B cell (primary cell): ENCODE measurements at regions of chr15 and their contacts with region 1.

Region 1: GRCh38 chr15:56732921-56733797 is at the start of gene ZNF280D:
- DNase-seq: peak; percentile 86
- ATAC-seq: peak; percentile 84
- H3K4me3 ChIP-seq: peak within 1 kb of the TSS; percentile 65 to 92 (median 83)
- H3K4me3 Mint-ChIP-seq: peak within 1 kb of the TSS; percentile 94
- H3K27ac ChIP-seq: peak within 1 kb of the TSS; percentile 59 to 83
- H3K27ac Mint-ChIP-seq: peak within 1 kb of the TSS; percentile 92
- H3K4me1 ChIP-seq: peaks cover 24 to 25% of the 10 kb centered on the region in 2 donors
- H3K4me1 Mint-ChIP-seq: peaks cover 36% of the 10 kb centered on the region
- H3K27me3 ChIP-seq: no peaks in the 10 kb centered on the region
- H3K27me3 Mint-ChIP-seq: no peaks in the 10 kb centered on the region
- CTCF ChIP-seq: no peak
- total RNA-seq, gene ZNF280D: 63.7 and 68.3 TPM in 2 replicates

Region 2: DNA sequence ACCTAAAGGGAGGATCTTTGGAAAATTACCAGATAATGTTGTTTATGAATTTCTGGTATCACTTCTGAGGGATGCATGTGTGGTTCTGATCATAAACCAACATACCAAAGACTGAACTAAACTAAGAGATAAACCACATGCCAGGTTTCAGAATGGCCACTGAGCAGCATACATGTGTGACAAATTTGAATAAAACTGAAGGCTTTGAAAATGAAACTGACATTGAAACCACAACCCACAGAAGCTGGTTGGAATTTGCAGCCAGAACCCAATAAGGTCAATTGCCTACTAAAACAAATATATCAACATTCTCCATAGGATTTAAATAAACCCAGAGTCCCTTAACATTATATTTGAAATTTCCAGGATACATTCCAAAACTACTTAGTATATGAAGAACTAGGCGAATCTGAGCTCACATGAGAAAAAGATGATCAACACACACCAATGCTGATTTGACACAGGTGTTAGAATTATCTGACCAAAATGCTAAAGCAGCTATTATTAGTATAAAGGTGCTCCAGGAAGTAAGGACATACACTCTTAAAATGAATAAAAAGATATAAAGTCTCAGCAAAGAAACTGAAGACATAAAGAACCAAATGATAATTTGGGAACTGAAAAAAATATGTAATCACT is 124.9 kb before region 1 on chr15:
- CTCF ChIA-PET with region 1: no interaction called
- POLR2A ChIA-PET with region 1: no interaction called
- intact Hi-C with region 1: loop called (anchors 5 kb)
- DNase-seq: peak; percentile 57
- ATAC-seq: peak; percentile 72
- H3K4me3 ChIP-seq: peak overlapping the region in 1 of 5 experiments; percentile 26
- H3K4me3 Mint-ChIP-seq: peak overlapping the region; percentile 23
- H3K27ac ChIP-seq: peak overlapping the region in 1 of 2 donors; percentile 55
- H3K27ac Mint-ChIP-seq: peak overlapping the region; percentile 5
- H3K4me1 ChIP-seq: peaks cover 20 to 33% of the 10 kb centered on the region in 2 donors
- H3K4me1 Mint-ChIP-seq: peaks cover 36% of the 10 kb centered on the region
- H3K27me3 ChIP-seq: no peaks in the 10 kb centered on the region
- H3K27me3 Mint-ChIP-seq: no peaks in the 10 kb centered on the region
- CTCF ChIP-seq: no peak

Region 3: GRCh38 chr15:56648311-56648710 is 84.8 kb before region 1 on chr15:
- CTCF ChIA-PET with region 1: no interaction called
- POLR2A ChIA-PET with region 1: no interaction called
- intact Hi-C with region 1: no loop called
- DNase-seq: no peak
- ATAC-seq: no peak
- H3K4me3 ChIP-seq: no peak overlapping the region
- H3K4me3 Mint-ChIP-seq: no peak overlapping the region
- H3K27ac ChIP-seq: no peak overlapping the region
- H3K27ac Mint-ChIP-seq: no peak overlapping the region
- H3K4me1 ChIP-seq: no peaks in the 10 kb centered on the region
- H3K4me1 Mint-ChIP-seq: no peaks in the 10 kb centered on the region
- H3K27me3 ChIP-seq: no peaks in the 10 kb centered on the region
- H3K27me3 Mint-ChIP-seq: no peaks in the 10 kb centered on the region
- CTCF ChIP-seq: no peak

Region 4: GRCh38 chr15:56678571-56678970 is 54.6 kb before region 1 on chr15:
- CTCF ChIA-PET with region 1: no interaction called
- POLR2A ChIA-PET with region 1: no interaction called
- intact Hi-C with region 1: no loop called
- DNase-seq: no peak
- ATAC-seq: no peak
- H3K4me3 ChIP-seq: no peak overlapping the region
- H3K4me3 Mint-ChIP-seq: no peak overlapping the region
- H3K27ac ChIP-seq: no peak overlapping the region
- H3K27ac Mint-ChIP-seq: no peak overlapping the region
- H3K4me1 ChIP-seq: no peaks in the 10 kb centered on the region
- H3K4me1 Mint-ChIP-seq: no peaks in the 10 kb centered on the region
- H3K27me3 ChIP-seq: no peaks in the 10 kb centered on the region
- H3K27me3 Mint-ChIP-seq: no peaks in the 10 kb centered on the region
- CTCF ChIP-seq: no peak

Region 5: GRCh38 chr15:56804938-56805337 is 71.8 kb after region 1 on chr15:
- CTCF ChIA-PET with region 1: no interaction called
- POLR2A ChIA-PET with region 1: no interaction called
- intact Hi-C with region 1: loop called (anchors 5 kb)
- DNase-seq: no peak
- ATAC-seq: no peak
- H3K4me3 ChIP-seq: peak overlapping the region in 1 of 5 experiments; percentile 19
- H3K4me3 Mint-ChIP-seq: no peak overlapping the region
- H3K27ac ChIP-seq: no peak overlapping the region
- H3K27ac Mint-ChIP-seq: no peak overlapping the region
- H3K4me1 ChIP-seq: peaks cover 23 to 25% of the 10 kb centered on the region in 2 donors
- H3K4me1 Mint-ChIP-seq: peaks cover 26% of the 10 kb centered on the region
- H3K27me3 ChIP-seq: no peaks in the 10 kb centered on the region
- H3K27me3 Mint-ChIP-seq: no peaks in the 10 kb centered on the region
- CTCF ChIP-seq: no peak

Region 6: GRCh38 chr15:56918046-56918938 is 185.1 kb after region 1 on chr15 and contains the start of gene TCF12:
- CTCF ChIA-PET with region 1: no interaction called
- POLR2A ChIA-PET with region 1: interaction called, 7 read pairs
- intact Hi-C with region 1: loop called (anchors 1 kb)
- DNase-seq: peak; percentile 97
- ATAC-seq: peak; percentile 74
- H3K4me3 ChIP-seq: peak within 1 kb of the TSS; percentile 80 to 92 (median 89)
- H3K4me3 Mint-ChIP-seq: peak within 1 kb of the TSS; percentile 93
- H3K27ac ChIP-seq: peak within 1 kb of the TSS; percentile 79 to 86
- H3K27ac Mint-ChIP-seq: peak within 1 kb of the TSS; percentile 92
- H3K4me1 ChIP-seq: peaks cover 19 to 21% of the 10 kb centered on the region in 2 donors
- H3K4me1 Mint-ChIP-seq: peaks cover 32% of the 10 kb centered on the region
- H3K27me3 ChIP-seq: no peaks in the 10 kb centered on the region
- H3K27me3 Mint-ChIP-seq: no peaks in the 10 kb centered on the region
- CTCF ChIP-seq: peak; percentile 59
- total RNA-seq, gene TCF12: 131 TPM in 2 replicates

Region 7: DNA sequence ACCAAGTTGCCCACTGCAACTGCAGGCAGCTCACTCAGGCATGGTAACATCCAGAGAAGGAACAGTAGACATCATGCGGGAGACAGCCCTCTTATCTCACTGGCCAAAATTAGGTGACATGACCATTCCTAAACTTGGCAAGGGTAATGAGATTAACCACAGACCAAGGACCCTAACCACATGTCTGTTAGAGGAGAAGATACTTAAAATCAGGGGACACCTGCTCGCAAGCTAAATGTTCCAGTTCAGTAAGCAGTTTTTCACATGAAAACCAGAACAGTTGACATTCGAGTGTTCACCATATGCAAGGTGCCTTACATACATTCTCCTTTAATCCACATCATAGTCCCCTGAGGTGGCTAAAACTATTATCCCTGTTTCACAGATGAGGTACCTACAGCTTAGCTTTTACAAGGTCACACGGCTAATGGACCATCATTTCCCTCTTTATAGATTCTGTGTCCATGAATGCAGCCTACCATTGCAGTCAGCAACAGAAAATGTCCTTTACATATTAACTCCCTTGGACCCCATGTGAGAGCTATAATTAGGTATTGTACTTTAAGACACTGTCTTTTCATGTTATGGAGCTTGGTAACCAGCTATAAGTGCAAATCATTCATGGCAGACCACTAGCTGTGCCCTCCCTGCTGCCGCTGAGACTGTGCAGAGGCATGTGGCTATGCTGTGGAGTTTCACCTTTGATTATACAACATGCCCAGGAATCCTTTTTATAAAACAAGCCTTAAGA is 1852.7 kb after region 1 on chr15:
- CTCF ChIA-PET with region 1: no interaction called
- POLR2A ChIA-PET with region 1: no interaction called
- intact Hi-C with region 1: no loop called
- DNase-seq: no peak
- ATAC-seq: no peak
- H3K4me3 ChIP-seq: no peak overlapping the region
- H3K4me3 Mint-ChIP-seq: peak overlapping the region; percentile 13
- H3K27ac ChIP-seq: no peak overlapping the region
- H3K27ac Mint-ChIP-seq: no peak overlapping the region
- H3K4me1 ChIP-seq: peaks cover 12 to 13% of the 10 kb centered on the region in 2 donors
- H3K4me1 Mint-ChIP-seq: peaks cover 16% of the 10 kb centered on the region
- H3K27me3 ChIP-seq: peaks cover 0 to 9% (median 0%) of the 10 kb centered on the region in 4 experiments
- H3K27me3 Mint-ChIP-seq: peaks cover 18% of the 10 kb centered on the region
- CTCF ChIP-seq: no peak